ENCODE measurements at regions of chr14 and their contacts with region 1.

Region 1: DNA sequence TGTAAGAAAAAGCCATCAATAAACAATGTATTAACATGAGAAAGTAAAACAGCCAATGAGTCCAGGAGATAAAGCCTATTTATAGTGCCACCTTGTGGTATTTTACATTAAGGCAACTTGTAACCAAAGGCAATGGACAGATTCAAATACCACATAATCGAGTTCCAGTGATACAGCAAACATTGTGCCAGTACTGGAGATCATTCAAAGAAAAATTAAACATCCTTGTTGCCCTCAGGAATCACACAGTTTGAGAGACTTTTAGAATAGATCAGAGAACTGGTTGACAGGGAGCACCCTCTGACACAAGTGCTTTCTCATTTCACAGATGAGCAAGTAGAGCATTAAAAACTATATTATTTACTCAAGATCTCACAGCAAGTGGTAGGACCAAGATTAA is 98.1 kb downstream of the DDHD1 start:
- DNase-seq: peak in 7 of 9 donors; percentile 8 to 47 (median 30)
- ATAC-seq: peak; percentile 76
- H3K4me3 ChIP-seq: no peak overlapping the region
- H3K4me3 Mint-ChIP-seq: no peak overlapping the region
- H3K27ac ChIP-seq: no peak overlapping the region
- H3K27ac Mint-ChIP-seq: peak overlapping the region in 3 of 9 donors; percentile 11 to 40 (median 19)
- H3K4me1 ChIP-seq: no peaks in the 10 kb centered on the region
- H3K4me1 Mint-ChIP-seq: peaks cover 0 to 11% (median 4%) of the 10 kb centered on the region in 7 donors
- H3K27me3 ChIP-seq: no peaks in the 10 kb centered on the region
- H3K27me3 Mint-ChIP-seq: no peaks in the 10 kb centered on the region

Region 2: DNA sequence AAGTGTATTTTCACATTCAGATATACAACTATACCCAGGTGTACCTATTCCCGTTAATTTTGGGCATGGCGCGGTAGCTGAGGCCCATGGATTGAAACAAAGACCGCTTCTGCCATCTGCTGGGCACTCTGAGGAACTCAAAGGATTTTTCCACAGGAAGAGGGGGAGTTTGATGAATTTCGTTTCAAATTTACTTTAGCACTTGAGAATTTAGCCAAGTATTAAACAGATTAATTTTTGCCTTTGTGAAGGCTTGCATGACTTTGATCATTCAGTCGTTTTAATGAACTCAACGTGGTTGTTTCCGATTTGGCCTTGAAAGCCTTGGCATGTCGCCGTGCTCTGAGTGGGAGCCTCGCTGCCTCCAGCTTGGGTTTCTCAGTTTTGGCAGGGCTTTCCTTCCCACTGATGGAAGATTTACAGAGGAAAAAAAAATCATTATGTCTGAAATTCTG is 251.3 kb after region 1 on chr14:
- CTCF ChIA-PET with region 1: interaction called, 3 read pairs
- POLR2A ChIA-PET with region 1: no interaction called
- intact Hi-C with region 1: loop called (anchors 1 to 2 kb)
- DNase-seq: peak in 7 of 9 donors; percentile 2 to 44 (median 34)
- ATAC-seq: peak; percentile 55
- H3K4me3 ChIP-seq: peak overlapping the region; percentile 46
- H3K4me3 Mint-ChIP-seq: peak overlapping the region; percentile 52 to 83 (median 70)
- H3K27ac ChIP-seq: no peak overlapping the region
- H3K27ac Mint-ChIP-seq: peak overlapping the region in 1 of 9 donors; percentile 13
- H3K4me1 ChIP-seq: peaks cover 0 to 3% of the 10 kb centered on the region in 2 donors
- H3K4me1 Mint-ChIP-seq: peaks cover 0 to 16% (median 6%) of the 10 kb centered on the region in 7 donors
- H3K27me3 ChIP-seq: no peaks in the 10 kb centered on the region
- H3K27me3 Mint-ChIP-seq: peaks cover 0 to 16% (median 0%) of the 10 kb centered on the region in 5 donors